CD8-positive, alpha-beta T cell (primary cell): ENCODE measurements at regions of chr4 and their contacts with region 1.

Region 1: GRCh38 chr4:15457406-15458201 is 12.1 kb upstream of the CC2D2A start:
- DNase-seq: peak in 2 of 9 experiments; percentile 45 to 63
- ATAC-seq: peak; percentile 59
- H3K4me3 ChIP-seq: no peak overlapping the region
- H3K4me3 Mint-ChIP-seq: no peak overlapping the region
- H3K27ac ChIP-seq: no peak overlapping the region
- H3K27ac Mint-ChIP-seq: no peak overlapping the region
- H3K4me1 ChIP-seq: no peaks in the 10 kb centered on the region
- H3K4me1 Mint-ChIP-seq: peaks cover 3% of the 10 kb centered on the region
- H3K27me3 ChIP-seq: no peaks in the 10 kb centered on the region
- H3K27me3 Mint-ChIP-seq: no peaks in the 10 kb centered on the region
- CTCF ChIP-seq: peak; percentile 77

Region 2: DNA sequence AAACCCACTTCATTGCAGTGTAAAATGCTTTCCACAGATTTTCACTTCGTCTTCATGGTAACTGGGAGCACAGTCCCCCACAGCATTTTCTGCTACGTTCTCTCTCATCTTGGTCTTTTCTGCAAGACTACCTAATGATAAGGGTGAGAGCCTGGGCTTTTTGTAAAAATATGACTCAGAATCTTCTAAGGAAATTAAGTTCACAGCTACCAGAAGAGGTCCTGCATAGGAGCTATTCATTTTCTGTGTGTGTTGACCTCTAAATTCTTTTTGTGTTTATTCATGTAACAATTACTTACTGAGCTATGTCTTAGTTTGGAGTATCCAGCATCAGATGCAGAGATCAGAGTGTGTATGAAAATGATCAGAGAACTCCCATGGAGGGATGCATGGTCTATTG is 263.1 kb before region 1 on chr4:
- CTCF ChIA-PET with region 1: no interaction called
- POLR2A ChIA-PET with region 1: no interaction called
- intact Hi-C with region 1: no loop called
- DNase-seq: no peak
- ATAC-seq: no peak
- H3K4me3 ChIP-seq: no peak overlapping the region
- H3K4me3 Mint-ChIP-seq: no peak overlapping the region
- H3K27ac ChIP-seq: no peak overlapping the region
- H3K27ac Mint-ChIP-seq: no peak overlapping the region
- H3K4me1 ChIP-seq: no peaks in the 10 kb centered on the region
- H3K4me1 Mint-ChIP-seq: no peaks in the 10 kb centered on the region
- H3K27me3 ChIP-seq: no peaks in the 10 kb centered on the region
- H3K27me3 Mint-ChIP-seq: no peaks in the 10 kb centered on the region
- CTCF ChIP-seq: no peak

Region 3: DNA sequence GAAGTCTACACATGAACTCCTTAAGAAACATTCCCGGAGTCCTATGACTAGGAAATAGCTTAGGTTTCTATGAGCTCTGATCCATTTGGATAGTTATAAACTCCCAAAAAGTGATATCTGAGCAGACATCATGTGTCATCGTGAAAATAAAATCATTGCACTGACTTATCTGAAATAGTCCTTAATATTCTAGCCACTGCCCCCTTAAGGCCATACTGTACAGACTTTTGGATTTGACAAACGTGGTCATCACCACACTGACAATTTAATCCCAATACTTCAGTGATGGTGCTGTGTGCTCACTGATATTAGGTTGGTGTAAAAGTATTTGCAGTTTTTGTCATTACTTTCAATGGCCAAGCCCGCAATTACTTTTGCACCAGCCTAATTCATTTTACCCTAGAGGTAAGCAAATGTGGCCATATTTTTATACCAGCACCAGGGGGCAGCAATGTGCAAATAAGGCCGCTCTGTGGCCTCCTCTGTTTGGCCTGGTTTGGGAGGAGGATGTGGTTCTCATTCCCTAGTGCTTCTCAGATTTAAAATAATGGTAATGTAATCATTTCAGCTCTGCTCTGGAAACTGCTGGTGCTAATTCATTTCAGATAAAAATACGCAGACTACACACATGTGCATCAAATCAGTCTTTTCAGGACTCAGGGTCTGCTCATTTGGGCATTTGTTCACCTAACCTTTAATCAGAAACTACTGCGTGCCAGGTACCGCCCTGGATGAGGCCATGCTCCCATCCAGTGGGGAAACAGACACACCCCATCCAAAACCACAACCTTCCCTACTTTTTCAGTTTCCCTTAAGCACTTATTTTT is 226.1 kb before region 1 on chr4:
- CTCF ChIA-PET with region 1: interaction called, 179 read pairs
- POLR2A ChIA-PET with region 1: no interaction called
- intact Hi-C with region 1: loop called (anchors 1 kb)
- DNase-seq: peak; percentile 38 to 83 (median 71)
- ATAC-seq: peak; percentile 81
- H3K4me3 ChIP-seq: no peak overlapping the region
- H3K4me3 Mint-ChIP-seq: no peak overlapping the region
- H3K27ac ChIP-seq: no peak overlapping the region
- H3K27ac Mint-ChIP-seq: no peak overlapping the region
- H3K4me1 ChIP-seq: peaks cover 29% of the 10 kb centered on the region
- H3K4me1 Mint-ChIP-seq: peaks cover 31% of the 10 kb centered on the region
- H3K27me3 ChIP-seq: no peaks in the 10 kb centered on the region
- H3K27me3 Mint-ChIP-seq: no peaks in the 10 kb centered on the region
- CTCF ChIP-seq: peak; percentile 71

Region 4: GRCh38 chr4:15396157-15396800 is 61.3 kb before region 1 on chr4:
- CTCF ChIA-PET with region 1: interaction called, 30 read pairs
- POLR2A ChIA-PET with region 1: interaction called, 4 read pairs
- intact Hi-C with region 1: loop called in 1 of 2 experiments (anchors 1 kb)
- DNase-seq: peak; percentile 5 to 69 (median 43)
- ATAC-seq: peak; percentile 85
- H3K4me3 ChIP-seq: no peak overlapping the region
- H3K4me3 Mint-ChIP-seq: no peak overlapping the region
- H3K27ac ChIP-seq: no peak overlapping the region
- H3K27ac Mint-ChIP-seq: no peak overlapping the region
- H3K4me1 ChIP-seq: peaks cover 16% of the 10 kb centered on the region
- H3K4me1 Mint-ChIP-seq: peaks cover 29% of the 10 kb centered on the region
- H3K27me3 ChIP-seq: no peaks in the 10 kb centered on the region
- H3K27me3 Mint-ChIP-seq: no peaks in the 10 kb centered on the region
- CTCF ChIP-seq: peak; percentile 72

Region 5: GRCh38 chr4:15469402-15470127 is 12.0 kb after region 1 on chr4 and contains the start of gene CC2D2A:
- CTCF ChIA-PET with region 1: interaction called, 50 read pairs
- POLR2A ChIA-PET with region 1: interaction called, 5 read pairs
- intact Hi-C with region 1: no loop called
- DNase-seq: peak in 1 of 9 experiments; percentile 14
- ATAC-seq: no peak
- H3K4me3 ChIP-seq: peak within 1 kb of the TSS; percentile 16 to 35
- H3K4me3 Mint-ChIP-seq: peak within 1 kb of the TSS; percentile 64
- H3K27ac ChIP-seq: no peak within 1 kb of the TSS
- H3K27ac Mint-ChIP-seq: no peak within 1 kb of the TSS
- H3K4me1 ChIP-seq: peaks cover 13% of the 10 kb centered on the region
- H3K4me1 Mint-ChIP-seq: peaks cover 16% of the 10 kb centered on the region
- H3K27me3 ChIP-seq: no peaks in the 10 kb centered on the region
- H3K27me3 Mint-ChIP-seq: no peaks in the 10 kb centered on the region
- CTCF ChIP-seq: no peak
- total RNA-seq, gene CC2D2A: not detected

Region 6: DNA sequence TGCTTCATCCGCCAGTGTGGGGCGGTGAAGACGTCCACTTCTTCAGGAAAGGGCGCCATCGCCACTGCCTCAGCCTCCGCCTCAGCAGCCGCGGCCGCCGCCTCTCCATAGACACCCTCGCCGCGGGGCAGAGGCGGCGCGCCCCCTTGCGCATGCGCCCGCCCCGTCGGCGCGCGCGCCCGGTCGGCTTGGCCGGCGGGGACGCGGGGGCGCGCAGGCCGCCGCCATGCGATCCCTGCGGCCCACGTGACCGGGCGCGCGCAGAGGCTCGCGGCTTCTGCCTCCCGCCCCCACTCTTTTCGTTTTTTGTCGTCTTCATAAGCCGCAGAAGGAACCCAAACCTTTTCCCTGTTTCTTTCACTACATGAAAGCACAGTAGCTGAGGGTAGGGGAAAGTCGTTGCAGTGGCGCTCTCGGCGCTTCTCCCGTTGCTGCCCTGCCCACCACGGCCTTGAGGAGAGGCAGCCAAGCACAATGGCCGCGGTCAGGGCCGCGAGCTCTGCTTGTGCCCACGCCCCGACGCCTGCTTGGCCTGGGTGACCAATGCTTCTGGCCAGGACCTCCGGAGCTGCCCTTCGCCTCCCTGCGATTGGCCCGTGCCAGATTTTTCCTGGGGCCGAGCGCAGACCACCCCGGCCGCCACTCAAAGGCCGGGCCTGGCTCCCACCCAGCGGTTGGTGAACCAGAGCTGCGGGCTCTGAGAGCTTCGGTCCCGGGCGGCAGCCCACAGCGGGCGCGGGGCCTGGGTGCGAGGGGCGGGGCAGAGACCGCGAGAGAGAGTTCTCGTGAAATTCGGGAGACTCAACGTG is 197.8 kb after region 1 on chr4 and contains the start of gene FBXL5:
- CTCF ChIA-PET with region 1: interaction called, 6 read pairs
- POLR2A ChIA-PET with region 1: no interaction called
- intact Hi-C with region 1: loop called (anchors 1 to 5 kb)
- DNase-seq: peak; percentile 66 to 95 (median 80)
- ATAC-seq: peak; percentile 79
- H3K4me3 ChIP-seq: peak within 1 kb of the TSS; percentile 67 to 85
- H3K4me3 Mint-ChIP-seq: peak within 1 kb of the TSS; percentile 98
- H3K27ac ChIP-seq: peak within 1 kb of the TSS; percentile 88 to 92
- H3K27ac Mint-ChIP-seq: peak within 1 kb of the TSS; percentile 97
- H3K4me1 ChIP-seq: peaks cover 51% of the 10 kb centered on the region
- H3K4me1 Mint-ChIP-seq: peaks cover 46% of the 10 kb centered on the region
- H3K27me3 ChIP-seq: no peaks in the 10 kb centered on the region
- H3K27me3 Mint-ChIP-seq: no peaks in the 10 kb centered on the region
- CTCF ChIP-seq: no peak
- total RNA-seq, gene FBXL5: 60.4 to 61.7 TPM

Region 7: DNA sequence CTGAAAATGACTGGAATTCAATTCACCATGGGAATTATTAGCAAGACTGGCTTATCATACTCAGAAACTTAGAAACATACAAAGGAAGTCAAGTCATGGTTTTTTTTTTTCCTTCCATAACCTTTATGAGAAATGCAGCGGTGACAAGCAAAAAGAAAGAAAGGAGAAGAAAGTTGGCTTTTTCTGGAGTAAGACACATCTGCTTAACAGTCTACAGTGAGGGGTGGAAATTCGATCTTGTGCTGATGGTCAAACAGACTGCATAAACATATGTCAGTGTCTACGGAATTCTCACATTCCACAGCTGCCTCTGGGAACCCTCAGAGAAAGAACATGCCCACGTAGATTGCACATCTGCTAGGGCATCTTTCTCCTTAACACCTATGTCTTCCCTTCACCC is 571.7 kb after region 1 on chr4:
- CTCF ChIA-PET with region 1: no interaction called
- POLR2A ChIA-PET with region 1: no interaction called
- intact Hi-C with region 1: no loop called
- DNase-seq: no peak
- ATAC-seq: no peak
- H3K4me3 ChIP-seq: no peak overlapping the region
- H3K4me3 Mint-ChIP-seq: no peak overlapping the region
- H3K27ac ChIP-seq: no peak overlapping the region
- H3K27ac Mint-ChIP-seq: no peak overlapping the region
- H3K4me1 ChIP-seq: no peaks in the 10 kb centered on the region
- H3K4me1 Mint-ChIP-seq: no peaks in the 10 kb centered on the region
- H3K27me3 ChIP-seq: peaks cover 2 to 4% of the 10 kb centered on the region in 2 experiments
- H3K27me3 Mint-ChIP-seq: peaks cover 2% of the 10 kb centered on the region
- CTCF ChIP-seq: no peak